Caco-2 (cell line): ENCODE measurements at regions of chr19 and their contacts with region 1.

Region 1: GRCh38 chr19:54001496-54001895 is 10.1 kb downstream of the CACNG6 start:
- DNase-seq: no peak
- H3K4me3 ChIP-seq: no peak overlapping the region
- H3K4me3 Mint-ChIP-seq: no peak overlapping the region
- H3K27ac Mint-ChIP-seq: no peak overlapping the region
- H3K4me1 ChIP-seq: no peaks in the 10 kb centered on the region
- H3K4me1 Mint-ChIP-seq: no peaks in the 10 kb centered on the region
- H3K27me3 ChIP-seq: no peaks in the 10 kb centered on the region
- H3K27me3 Mint-ChIP-seq: no peaks in the 10 kb centered on the region
- CTCF ChIP-seq: no peak

Region 2: DNA sequence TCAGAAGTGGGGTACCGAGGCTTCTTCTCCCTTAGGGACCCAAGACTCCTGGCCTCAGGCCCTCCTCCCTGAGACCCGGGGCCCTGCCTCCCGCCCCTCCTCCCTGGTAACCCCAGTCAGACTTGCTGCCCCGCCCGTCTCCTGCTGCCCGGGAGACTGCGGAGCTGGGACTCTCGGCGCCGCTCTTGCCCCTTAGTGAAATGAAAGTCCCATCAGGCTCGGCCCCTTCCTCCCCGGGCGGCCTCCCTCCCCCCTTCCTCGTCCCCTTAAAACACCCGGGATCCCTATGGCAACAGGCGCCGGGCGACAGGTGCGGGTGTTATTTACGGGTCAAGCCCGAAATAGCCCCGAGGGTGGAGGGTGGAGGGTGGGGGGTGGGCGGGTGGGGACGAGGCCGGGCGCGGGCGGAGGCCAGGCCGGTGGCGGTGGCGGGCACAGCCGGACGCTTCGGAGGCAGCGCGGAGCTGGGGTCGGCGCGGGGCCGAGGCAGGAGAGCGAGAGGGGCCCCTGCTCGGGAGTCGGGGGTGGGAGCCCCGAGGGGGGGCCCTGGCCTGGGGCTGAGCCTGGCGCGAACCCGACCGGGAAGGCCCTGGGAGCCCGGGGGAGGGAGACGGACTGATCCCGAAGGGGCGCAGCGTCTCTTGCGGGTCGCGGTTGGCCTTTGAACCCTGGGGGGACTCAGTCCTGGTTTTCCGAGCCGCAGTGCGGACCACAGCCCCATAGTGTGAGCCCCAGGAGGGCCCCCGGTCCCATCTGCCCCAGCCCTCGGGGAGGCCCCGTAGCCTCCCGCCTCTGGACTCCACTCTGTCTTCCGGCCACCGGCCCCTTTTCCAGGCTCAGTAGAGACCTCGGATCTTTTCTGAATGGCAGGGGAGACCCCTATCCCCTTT is 10.0 kb before region 1 on chr19 and contains the start of gene CACNG6:
- CTCF ChIA-PET with region 1: no interaction called
- POLR2A ChIA-PET with region 1: interaction called, 10 read pairs
- intact Hi-C with region 1: no loop called
- DNase-seq: peak; percentile 69 to 71
- H3K4me3 ChIP-seq: peak within 1 kb of the TSS; percentile 41
- H3K4me3 Mint-ChIP-seq: peak within 1 kb of the TSS; percentile 63
- H3K27ac Mint-ChIP-seq: peak within 1 kb of the TSS; percentile 59
- H3K4me1 ChIP-seq: no peaks in the 10 kb centered on the region
- H3K4me1 Mint-ChIP-seq: no peaks in the 10 kb centered on the region
- H3K27me3 ChIP-seq: no peaks in the 10 kb centered on the region
- H3K27me3 Mint-ChIP-seq: no peaks in the 10 kb centered on the region
- CTCF ChIP-seq: no peak
- total RNA-seq, gene CACNG6: 1.4 and 1.6 TPM in 2 replicates

Region 3: DNA sequence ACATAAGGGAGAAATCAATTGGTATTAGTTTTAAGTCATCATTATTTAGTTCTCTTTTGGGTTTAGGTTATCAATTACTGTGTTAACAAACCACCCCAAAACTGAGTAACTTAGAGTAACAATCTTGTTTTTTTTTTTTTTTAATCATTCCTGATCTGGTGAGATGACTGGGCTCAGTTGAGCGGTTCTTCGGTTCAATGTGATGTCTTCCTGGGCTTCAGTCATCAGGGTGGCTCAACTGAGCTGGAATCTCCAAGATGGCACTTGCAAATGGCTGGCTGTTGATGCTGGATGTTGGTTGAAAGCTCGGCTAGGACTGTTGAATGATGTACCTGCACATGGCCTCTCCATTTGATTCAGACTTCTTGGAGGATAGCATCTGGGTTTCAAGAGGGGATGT is 82.9 kb after region 1 on chr19:
- CTCF ChIA-PET with region 1: no interaction called
- POLR2A ChIA-PET with region 1: no interaction called
- intact Hi-C with region 1: no loop called
- DNase-seq: no peak
- H3K4me3 ChIP-seq: no peak overlapping the region
- H3K4me3 Mint-ChIP-seq: no peak overlapping the region
- H3K27ac Mint-ChIP-seq: no peak overlapping the region
- H3K4me1 ChIP-seq: no peaks in the 10 kb centered on the region
- H3K4me1 Mint-ChIP-seq: no peaks in the 10 kb centered on the region
- H3K27me3 ChIP-seq: no peaks in the 10 kb centered on the region
- H3K27me3 Mint-ChIP-seq: peaks cover 2% of the 10 kb centered on the region
- CTCF ChIP-seq: no peak